K562 (cell line): ENCODE measurements at regions of chr11 and their contacts with region 1.

Region 1: GRCh38 chr11:72776844-72777761 is 16.7 kb downstream of the STARD10 start:
- DNase-seq: peak; percentile 89 to 94 (median 91)
- ATAC-seq: peak; percentile 86
- H3K4me3 ChIP-seq: peak overlapping the region; percentile 4; the same call in 1 of the 2 replicates
- H3K27ac ChIP-seq: peak overlapping the region; percentile 94
- H3K4me1 ChIP-seq: peaks cover 74 to 83% of the 10 kb centered on the region in 2 experiments
- H3K27me3 ChIP-seq: no peaks in the 10 kb centered on the region
- CTCF ChIP-seq: no peak
- EP300 ChIP-seq: peak; percentile 17; the same call in 1 of the 2 replicates
- POLR2A ChIP-seq: peak; percentile 83
- RAD21 ChIP-seq: no peak

Region 2: DNA sequence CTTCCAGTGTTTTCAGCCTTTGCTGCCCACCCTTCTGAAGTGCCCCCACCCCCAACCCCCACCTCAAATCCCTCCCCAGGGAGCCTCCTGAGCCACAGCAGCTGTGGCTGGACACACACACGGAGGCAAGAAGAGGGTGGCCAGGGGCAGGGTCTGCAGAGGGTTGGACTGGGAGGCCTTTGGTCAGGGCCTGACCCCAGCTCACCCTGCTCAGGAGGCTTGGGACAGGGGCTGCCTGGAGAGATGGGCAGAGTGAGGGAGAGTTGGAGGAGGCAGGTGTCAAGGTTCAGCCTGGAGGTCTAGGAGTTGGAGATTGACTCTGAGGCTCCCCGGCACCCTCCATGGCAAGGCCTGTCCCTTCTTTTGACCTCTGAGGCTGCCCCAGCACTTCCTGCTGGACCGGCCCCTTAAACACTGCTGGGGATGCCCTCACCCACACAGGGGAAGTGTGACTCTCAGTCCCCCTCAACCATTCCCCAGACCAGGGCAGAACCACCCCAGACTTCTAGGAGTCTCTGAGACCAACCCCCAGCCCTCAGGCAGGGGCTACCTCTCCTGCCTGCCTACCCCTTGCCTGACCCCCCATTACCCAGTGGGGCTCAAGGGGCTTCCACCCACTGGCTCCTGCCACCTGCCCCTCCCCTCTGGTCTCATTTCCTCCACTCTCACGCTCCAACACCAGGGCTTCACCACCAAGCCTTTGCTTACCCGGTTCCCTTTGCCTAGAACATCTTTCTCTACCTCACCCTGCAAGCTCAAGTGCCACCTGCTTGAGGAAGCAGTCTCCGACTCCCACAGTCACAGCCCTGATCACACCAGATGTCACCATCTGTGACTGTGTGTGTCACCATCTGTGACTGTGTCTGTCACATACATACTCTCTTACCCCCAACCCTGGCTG is 33.5 kb before region 1 on chr11:
- CTCF ChIA-PET with region 1: no interaction called
- POLR2A ChIA-PET with region 1: interaction called, 3 read pairs
- in situ Hi-C with region 1: no loop called
- intact Hi-C with region 1: loop called (anchors 5 kb)
- DNase-seq: no peak
- ATAC-seq: no peak
- H3K4me3 ChIP-seq: no peak overlapping the region
- H3K27ac ChIP-seq: peak overlapping the region; percentile 65; the same call in 2 of the 3 replicates
- H3K4me1 ChIP-seq: peaks cover 71 to 85% of the 10 kb centered on the region in 2 experiments
- H3K27me3 ChIP-seq: no peaks in the 10 kb centered on the region
- CTCF ChIP-seq: no peak
- EP300 ChIP-seq: no peak
- POLR2A ChIP-seq: no peak
- RAD21 ChIP-seq: no peak

Region 3: GRCh38 chr11:72758690-72759389 is 18.3 kb before region 1 on chr11:
- CTCF ChIA-PET with region 1: no interaction called
- POLR2A ChIA-PET with region 1: interaction called, 12 read pairs
- in situ Hi-C with region 1: no loop called
- intact Hi-C with region 1: no loop called
- DNase-seq: peak; percentile 72 to 95 (median 84)
- ATAC-seq: peak; percentile 95
- H3K4me3 ChIP-seq: no peak overlapping the region
- H3K27ac ChIP-seq: peak overlapping the region; percentile 62
- H3K4me1 ChIP-seq: peaks cover 19 to 35% of the 10 kb centered on the region in 2 experiments
- H3K27me3 ChIP-seq: no peaks in the 10 kb centered on the region
- CTCF ChIP-seq: no peak
- EP300 ChIP-seq: peak; percentile 51
- POLR2A ChIP-seq: no peak
- RAD21 ChIP-seq: no peak; a peak in 1 of 4 replicates

Region 4: DNA sequence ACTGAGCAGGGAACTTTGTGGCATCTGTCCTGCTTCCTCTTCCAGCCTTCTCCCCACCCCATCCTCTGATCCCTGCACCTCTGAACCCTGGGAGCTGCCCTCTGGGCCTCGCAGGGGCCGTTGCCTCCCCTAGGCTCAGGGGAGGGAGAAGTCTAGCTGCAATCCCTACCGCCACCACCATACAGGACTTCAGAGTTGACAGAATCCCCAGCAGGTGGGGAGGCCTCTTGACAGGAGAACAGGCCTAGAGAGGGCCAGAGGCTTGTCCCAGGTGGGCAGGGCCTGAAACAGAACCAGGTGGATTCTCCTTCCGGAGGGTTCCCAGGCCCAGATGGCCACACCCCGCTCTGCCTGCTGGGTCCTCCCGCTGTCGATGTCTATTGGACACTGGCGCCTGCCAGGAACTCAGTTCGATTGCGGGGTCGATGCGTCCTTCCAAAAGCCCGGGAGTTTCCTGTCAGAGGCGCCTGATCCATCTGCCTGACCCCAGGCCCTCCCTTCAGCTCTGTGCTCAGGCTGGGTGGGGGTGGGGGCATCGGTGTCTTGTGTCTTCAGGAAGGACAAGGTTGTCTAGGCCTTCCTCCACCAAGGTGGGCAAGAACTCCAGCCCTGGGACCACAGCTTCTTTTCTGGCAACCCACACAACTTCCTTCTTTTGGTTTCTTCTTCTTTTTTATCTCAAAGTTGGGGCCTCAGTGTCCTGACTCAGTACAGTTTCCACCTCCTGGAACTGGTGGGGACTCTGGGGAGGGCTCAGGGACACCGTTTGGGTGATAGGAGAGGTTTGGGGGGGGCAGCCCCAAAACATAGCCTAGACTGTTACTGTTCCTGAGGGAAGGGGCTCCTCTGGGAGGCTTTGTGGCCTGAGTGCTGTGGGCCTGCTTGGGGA is 10.4 kb after region 1 on chr11:
- CTCF ChIA-PET with region 1: no interaction called
- POLR2A ChIA-PET with region 1: interaction called, 36 read pairs
- in situ Hi-C with region 1: no loop called
- intact Hi-C with region 1: no loop called
- DNase-seq: peak; percentile 82 to 85 (median 84)
- ATAC-seq: peak; percentile 95
- H3K4me3 ChIP-seq: peak overlapping the region; percentile 8; the same call in 1 of the 2 replicates
- H3K27ac ChIP-seq: peak overlapping the region; percentile 81
- H3K4me1 ChIP-seq: peaks cover 35 to 49% of the 10 kb centered on the region in 2 experiments
- H3K27me3 ChIP-seq: no peaks in the 10 kb centered on the region
- CTCF ChIP-seq: peak; percentile 40 to 82 (median 63)
- EP300 ChIP-seq: no peak
- POLR2A ChIP-seq: peak; percentile 58
- RAD21 ChIP-seq: no peak

Region 5: DNA sequence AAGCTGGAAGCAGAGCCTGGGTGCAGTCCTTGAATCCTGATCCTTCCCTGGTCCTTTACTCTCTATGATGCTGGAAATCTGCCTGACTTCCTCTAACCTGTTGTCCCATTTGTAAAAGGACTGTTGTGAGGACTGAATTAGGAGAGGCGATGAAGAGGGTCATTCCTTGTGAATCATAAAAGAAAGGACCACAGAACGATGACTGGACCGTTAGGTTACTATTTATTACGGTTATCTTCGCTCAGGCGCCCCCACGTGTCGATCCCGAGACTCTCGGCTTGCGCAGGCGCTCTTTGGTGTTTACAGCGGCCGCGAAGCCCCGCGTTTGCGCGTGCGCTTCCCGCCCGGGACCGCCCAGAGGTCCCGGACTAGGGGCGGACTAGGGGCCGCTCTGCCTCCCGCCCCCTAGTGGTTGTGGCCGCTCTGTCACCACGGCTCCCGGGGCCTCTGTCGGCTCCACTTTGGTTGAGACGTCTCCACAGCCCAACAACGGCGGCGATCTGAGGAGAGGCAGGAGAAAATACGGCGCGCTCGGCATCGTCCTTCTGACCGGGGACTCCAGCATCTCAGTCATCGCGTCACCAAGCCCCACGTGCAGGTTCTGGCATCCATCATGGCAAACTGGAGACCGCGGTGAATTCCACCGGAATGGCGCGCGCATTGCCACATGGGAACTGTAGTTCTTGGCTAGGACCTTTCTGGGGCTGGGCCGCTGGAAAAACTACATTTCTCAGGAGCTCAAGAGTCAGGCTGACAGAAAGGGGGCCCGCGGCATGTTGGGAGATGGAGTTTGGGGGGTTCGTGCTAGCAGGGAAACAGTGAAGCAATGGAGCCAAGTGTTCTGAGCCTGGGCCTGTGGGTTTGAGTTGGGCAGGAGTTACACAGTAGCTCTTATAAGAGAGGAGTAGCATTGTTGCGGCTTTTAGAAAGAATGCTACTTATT is 16.6 kb after region 1 on chr11 and contains the start of gene STARD10:
- CTCF ChIA-PET with region 1: no interaction called
- POLR2A ChIA-PET with region 1: interaction called, 13 read pairs
- in situ Hi-C with region 1: no loop called
- intact Hi-C with region 1: loop called (anchors 1 kb)
- DNase-seq: peak; percentile 98 to 99 (median 99)
- ATAC-seq: peak; percentile 96
- H3K4me3 ChIP-seq: peak within 1 kb of the TSS; percentile 72
- H3K27ac ChIP-seq: peak within 1 kb of the TSS; percentile 86
- H3K4me1 ChIP-seq: peaks cover 23 to 40% of the 10 kb centered on the region in 2 experiments; a peak in 4 of 5 replicates
- H3K27me3 ChIP-seq: no peaks in the 10 kb centered on the region
- CTCF ChIP-seq: peak; percentile 91 to 99 (median 93)
- EP300 ChIP-seq: peak; percentile 38
- POLR2A ChIP-seq: peak; percentile 68
- RAD21 ChIP-seq: peak; percentile 80 to 85
- polyA plus RNA-seq, gene STARD10: 0.15 to 0.51 TPM